ENCODE measurements at regions of chr6 and their contacts with region 1.

Region 1: GRCh38 chr6:47309291-47310130 is at the start of gene TNFRSF21:
- DNase-seq: peak; percentile 58
- H3K4me3 ChIP-seq: peak within 1 kb of the TSS; percentile 61 to 90 (median 72)
- H3K27ac ChIP-seq: peak within 1 kb of the TSS; percentile 81 to 94 (median 88)
- H3K4me1 ChIP-seq: peaks cover 0 to 52% (median 14%) of the 10 kb centered on the region in 3 donors
- H3K27me3 ChIP-seq: peaks cover 0 to 35% (median 0%) of the 10 kb centered on the region in 4 donors
- CTCF ChIP-seq: peak; percentile 70 to 98 (median 94)
- POLR2A ChIP-seq: peak in 3 of 4 donors; percentile 72 to 94 (median 92)
- total RNA-seq, gene TNFRSF21: 43.4 to 78.9 (median 63.0) TPM

Region 2: GRCh38 chr6:47097092-47097945 is 212.2 kb before region 1 on chr6:
- intact Hi-C with region 1: loop called (anchors 5 kb)
- DNase-seq: no peak
- H3K4me3 ChIP-seq: no peak overlapping the region
- H3K27ac ChIP-seq: peak overlapping the region in 3 of 4 donors; percentile 12 to 75 (median 75)
- H3K4me1 ChIP-seq: peaks cover 0 to 51% (median 21%) of the 10 kb centered on the region in 3 donors
- H3K27me3 ChIP-seq: no peaks in the 10 kb centered on the region
- CTCF ChIP-seq: peak in 5 of 6 experiments; percentile 57 to 85 (median 70)
- POLR2A ChIP-seq: no peak

Region 3: GRCh38 chr6:47169785-47170201 is 139.7 kb before region 1 on chr6:
- intact Hi-C with region 1: loop called (anchors 10 kb)
- DNase-seq: no peak
- H3K4me3 ChIP-seq: no peak overlapping the region
- H3K27ac ChIP-seq: peak overlapping the region; percentile 70 to 84 (median 81)
- H3K4me1 ChIP-seq: peaks cover 17 to 56% (median 34%) of the 10 kb centered on the region in 3 donors
- H3K27me3 ChIP-seq: no peaks in the 10 kb centered on the region
- CTCF ChIP-seq: no peak
- POLR2A ChIP-seq: no peak

Region 4: DNA sequence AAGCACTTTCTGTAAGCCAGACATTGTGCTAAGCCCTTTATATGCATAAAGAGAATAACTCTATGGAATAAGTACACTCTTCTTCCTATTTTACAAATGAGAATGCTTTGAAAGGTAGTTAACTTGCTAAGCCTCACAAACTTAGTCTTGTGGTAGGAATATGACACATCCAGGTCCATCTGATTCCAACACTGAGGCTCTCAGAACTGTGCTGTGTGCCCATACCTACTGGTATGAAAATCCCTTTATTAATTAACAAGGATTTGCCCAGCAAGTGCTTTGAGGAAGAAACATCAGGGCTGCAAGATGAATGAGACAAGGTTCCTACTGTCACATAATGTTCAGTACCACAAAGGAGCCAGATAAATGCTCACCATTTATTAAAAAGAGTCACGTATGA is 122.4 kb before region 1 on chr6:
- intact Hi-C with region 1: no loop called
- DNase-seq: no peak
- H3K4me3 ChIP-seq: no peak overlapping the region
- H3K27ac ChIP-seq: no peak overlapping the region
- H3K4me1 ChIP-seq: peaks cover 0 to 41% (median 8%) of the 10 kb centered on the region in 3 donors
- H3K27me3 ChIP-seq: no peaks in the 10 kb centered on the region
- CTCF ChIP-seq: no peak
- POLR2A ChIP-seq: no peak

Region 5: DNA sequence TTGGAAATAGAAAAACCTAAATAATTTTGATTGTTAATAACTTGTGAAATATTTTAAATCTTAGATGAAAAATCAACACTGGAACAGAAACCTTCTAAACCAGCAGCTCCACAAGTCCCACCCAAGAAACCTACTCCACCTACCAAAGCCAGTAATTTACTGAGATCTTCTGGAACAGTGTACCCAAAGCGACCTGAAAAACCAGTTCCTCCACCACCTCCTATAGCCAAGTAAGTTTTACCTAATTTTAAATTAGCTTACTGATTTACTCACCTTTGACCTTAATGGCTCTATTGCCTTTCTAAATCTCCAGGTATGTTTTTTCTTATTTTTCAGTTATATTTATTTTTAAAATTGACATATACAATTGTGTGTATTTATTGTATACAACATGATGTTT is 286.3 kb after region 1 on chr6:
- intact Hi-C with region 1: no loop called
- DNase-seq: no peak
- H3K4me3 ChIP-seq: no peak overlapping the region
- H3K27ac ChIP-seq: peak overlapping the region in 3 of 4 donors; percentile 7 to 74 (median 61)
- H3K4me1 ChIP-seq: peaks cover 0 to 27% (median 0%) of the 10 kb centered on the region in 3 donors
- H3K27me3 ChIP-seq: no peaks in the 10 kb centered on the region
- CTCF ChIP-seq: no peak
- POLR2A ChIP-seq: no peak

Region 6: GRCh38 chr6:47865206-47865605 is 555.7 kb after region 1 on chr6:
- intact Hi-C with region 1: no loop called
- DNase-seq: no peak
- H3K4me3 ChIP-seq: no peak overlapping the region
- H3K27ac ChIP-seq: no peak overlapping the region
- H3K4me1 ChIP-seq: no peaks in the 10 kb centered on the region
- H3K27me3 ChIP-seq: no peaks in the 10 kb centered on the region
- CTCF ChIP-seq: no peak
- POLR2A ChIP-seq: no peak

Measured in esophagus squamous epithelium (tissue), 5 donors.